ENCODE measurements at regions of chr9 and their contacts with region 1.

Region 1: DNA sequence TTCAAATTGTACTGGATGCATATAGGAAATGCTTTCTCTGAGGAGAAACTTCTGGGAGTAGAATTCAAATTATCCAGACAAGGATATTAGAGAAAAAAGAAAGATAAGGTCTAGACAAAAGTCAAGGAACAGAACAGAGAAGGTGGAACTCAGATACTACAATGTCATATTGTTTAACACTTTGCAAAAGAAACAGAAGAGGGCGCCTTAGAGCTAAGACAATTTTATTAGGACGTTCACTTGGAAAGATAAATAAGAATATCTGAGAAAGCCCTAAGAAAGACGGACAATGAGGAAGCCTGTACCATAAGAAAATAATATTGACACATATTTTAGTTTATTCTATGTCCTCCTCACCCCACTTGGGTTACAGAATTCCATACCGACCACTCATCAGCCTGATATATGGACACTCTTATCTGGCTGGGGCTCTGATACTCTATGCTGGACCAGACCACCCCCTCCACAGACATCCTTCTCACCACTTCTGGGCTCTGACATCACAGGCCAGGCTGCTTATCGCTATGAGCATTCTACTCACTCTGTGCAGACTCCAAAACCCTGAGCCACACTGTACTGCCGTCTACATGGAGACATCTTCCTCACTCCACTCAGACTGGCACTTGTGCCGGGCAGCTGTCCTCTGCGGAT is 9.1 kb upstream of the AK3 start:
- DNase-seq: no peak
- ATAC-seq: no peak
- H3K4me3 ChIP-seq: no peak overlapping the region
- H3K27ac ChIP-seq: no peak overlapping the region
- H3K4me1 ChIP-seq: no peaks in the 10 kb centered on the region
- H3K27me3 ChIP-seq: no peaks in the 10 kb centered on the region
- CTCF ChIP-seq: peak in 6 of 7 experiments; percentile 39 to 64 (median 58)
- POLR2A ChIP-seq: no peak

Region 2: GRCh38 chr9:4620057-4620760 is 129.9 kb before region 1 on chr9:
- intact Hi-C with region 1: no loop called
- DNase-seq: no peak
- ATAC-seq: no peak
- H3K4me3 ChIP-seq: no peak overlapping the region
- H3K27ac ChIP-seq: no peak overlapping the region
- H3K4me1 ChIP-seq: no peaks in the 10 kb centered on the region
- H3K27me3 ChIP-seq: no peaks in the 10 kb centered on the region
- CTCF ChIP-seq: no peak
- POLR2A ChIP-seq: no peak

Region 3: DNA sequence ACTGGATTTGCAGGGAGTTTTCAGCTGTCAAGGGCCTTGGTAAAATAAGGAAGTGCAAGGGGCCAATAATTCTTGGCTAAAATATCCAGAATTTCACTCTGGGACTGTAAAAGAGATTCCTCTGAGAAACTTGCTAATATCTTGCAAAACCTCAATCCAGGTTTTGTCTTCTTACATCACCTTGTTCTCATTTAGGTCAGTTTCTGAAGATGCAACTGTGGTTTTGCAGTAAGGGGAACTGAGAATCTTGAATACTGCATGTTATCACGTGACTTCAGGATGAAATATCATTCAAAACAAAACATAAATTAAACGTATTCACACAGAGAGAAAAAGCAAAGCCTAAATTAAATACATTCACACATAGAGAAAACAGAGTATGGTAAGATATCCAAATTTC is 843.8 kb after region 1 on chr9:
- intact Hi-C with region 1: loop called (anchors 10 kb)
- DNase-seq: no peak
- ATAC-seq: no peak
- H3K4me3 ChIP-seq: no peak overlapping the region
- H3K27ac ChIP-seq: no peak overlapping the region
- H3K4me1 ChIP-seq: no peaks in the 10 kb centered on the region
- H3K27me3 ChIP-seq: no peaks in the 10 kb centered on the region
- CTCF ChIP-seq: no peak
- POLR2A ChIP-seq: no peak

Measured in body of pancreas (tissue), 4 donors.